Transverse colon (tissue), 4 donors: ENCODE measurements at regions of chr7 and their contacts with region 1.

Region 1: DNA sequence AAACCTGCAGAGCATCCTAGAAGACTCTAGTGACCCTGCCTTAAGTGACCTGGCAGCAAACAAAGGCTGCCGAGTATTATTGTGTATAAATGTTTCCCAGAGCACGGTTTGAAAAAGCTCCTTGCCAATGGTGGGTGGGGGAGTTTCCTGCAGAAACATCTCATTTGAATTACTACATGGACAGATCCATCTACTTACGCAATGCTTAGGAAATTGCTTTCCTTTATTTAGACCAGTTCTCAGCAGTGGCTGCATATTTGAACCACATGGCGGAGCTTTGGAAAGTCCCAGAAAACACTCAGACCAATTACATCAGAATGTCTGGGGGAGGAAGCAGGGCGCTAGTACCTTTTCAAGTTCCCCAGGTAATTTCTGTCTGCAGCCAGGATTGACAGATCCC is 560.9 kb downstream of the SDK1 start:
- DNase-seq: no peak
- H3K4me3 ChIP-seq: no peak overlapping the region
- H3K27ac ChIP-seq: peak overlapping the region in 3 of 4 donors; percentile 7 to 40 (median 26)
- H3K4me1 ChIP-seq: peaks cover 0 to 7% (median 0%) of the 10 kb centered on the region in 4 donors
- H3K27me3 ChIP-seq: no peaks in the 10 kb centered on the region
- CTCF ChIP-seq: no peak
- EP300 ChIP-seq: no peak
- POLR2A ChIP-seq: no peak

Region 2: DNA sequence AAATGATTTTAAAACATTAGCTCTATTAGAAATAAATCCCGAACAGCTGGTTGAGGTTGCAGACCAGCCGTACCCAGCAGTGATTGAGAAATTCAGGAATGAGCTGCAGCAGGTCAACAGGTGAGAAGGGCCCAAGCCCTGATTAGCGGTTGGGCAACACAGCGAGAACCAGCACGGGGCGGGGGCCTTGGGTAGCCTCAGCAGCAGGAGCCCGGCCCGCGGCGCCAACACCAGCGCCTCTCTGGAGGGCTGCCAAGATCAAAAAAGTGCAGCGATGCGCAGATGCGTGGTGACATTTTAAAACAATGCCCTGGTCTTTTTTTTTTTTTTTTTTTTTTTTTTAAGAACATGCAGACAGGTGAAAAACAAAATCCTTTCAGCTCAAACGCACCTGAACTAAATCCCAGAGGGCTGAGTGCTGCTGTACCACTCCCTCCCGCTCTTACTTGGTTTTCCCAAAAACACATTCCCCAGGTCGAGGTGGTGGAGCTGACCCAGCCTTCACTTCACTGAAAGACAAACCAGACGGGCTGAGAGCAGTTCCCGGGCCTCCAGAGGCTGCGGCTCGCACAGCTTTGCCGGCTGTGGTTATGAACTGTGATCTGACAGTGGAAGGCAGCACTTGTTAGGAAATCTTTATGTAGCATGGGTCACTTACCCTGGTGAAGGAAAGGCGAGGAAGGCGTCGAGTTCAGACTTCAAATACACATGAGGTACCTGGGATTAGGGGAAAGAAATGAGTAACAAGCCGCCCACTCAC is 18.5 kb after region 1 on chr7:
- in situ Hi-C with region 1: no loop called
- intact Hi-C with region 1: loop called (anchors 1 kb)
- DNase-seq: no peak
- H3K4me3 ChIP-seq: no peak overlapping the region
- H3K27ac ChIP-seq: no peak overlapping the region
- H3K4me1 ChIP-seq: no peaks in the 10 kb centered on the region
- H3K27me3 ChIP-seq: no peaks in the 10 kb centered on the region
- CTCF ChIP-seq: no peak
- EP300 ChIP-seq: no peak
- POLR2A ChIP-seq: no peak